Activated B cell treated with CpG ODN at 0.5 μM for 24 hours (primary cell): ENCODE measurements at regions of chr12 and their contacts with region 1.

Region 1: DNA sequence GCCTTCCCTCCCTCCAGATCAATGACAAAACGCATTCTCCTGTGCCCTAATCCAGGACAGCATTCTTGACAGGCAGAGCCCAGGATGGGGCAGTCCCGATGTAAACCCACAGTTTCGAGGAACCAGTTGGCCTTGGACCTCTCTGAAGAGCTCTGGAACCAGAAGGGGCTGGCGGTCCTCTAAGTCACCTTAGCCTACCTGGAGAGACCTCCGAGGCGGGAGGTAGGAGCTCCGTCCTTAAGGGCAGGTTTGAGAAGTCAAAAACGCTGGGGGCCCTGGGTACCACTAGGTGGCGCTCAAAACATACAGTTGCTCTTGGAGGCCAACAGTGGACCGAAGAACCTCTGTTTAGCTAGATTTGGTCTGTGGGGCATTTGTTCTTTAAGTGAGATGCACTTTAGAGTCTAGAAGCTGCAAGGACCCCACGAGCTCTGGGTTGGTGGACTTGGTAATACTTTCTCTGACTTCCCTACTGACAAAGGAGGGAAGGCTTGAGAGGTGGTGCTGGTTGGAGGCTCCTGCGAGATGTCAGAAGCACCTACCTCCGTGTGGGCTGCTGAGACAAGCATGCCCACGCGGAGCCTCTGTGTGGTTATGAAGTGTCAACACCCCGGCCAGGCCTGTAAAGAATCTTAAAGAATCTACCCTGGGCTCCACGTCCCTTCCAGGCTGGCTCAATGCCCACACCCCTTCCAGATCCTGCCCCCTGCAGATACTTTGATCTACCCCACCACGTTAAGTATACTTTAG is 74.8 kb upstream of the CHST11 start:
- DNase-seq: peak; percentile 68
- ATAC-seq: peak; percentile 88
- H3K4me3 Mint-ChIP-seq: no peak overlapping the region
- H3K27ac Mint-ChIP-seq: no peak overlapping the region
- H3K4me1 Mint-ChIP-seq: peaks cover 9% of the 10 kb centered on the region
- H3K27me3 Mint-ChIP-seq: peaks cover 4% of the 10 kb centered on the region
- CTCF ChIP-seq: peak; percentile 29

Region 2: GRCh38 chr12:103513875-103514274 is 868.0 kb before region 1 on chr12:
- CTCF ChIA-PET with region 1: no interaction called
- POLR2A ChIA-PET with region 1: no interaction called
- intact Hi-C with region 1: no loop called
- DNase-seq: no peak
- ATAC-seq: no peak
- H3K4me3 Mint-ChIP-seq: no peak overlapping the region
- H3K27ac Mint-ChIP-seq: peak overlapping the region; percentile 68
- H3K4me1 Mint-ChIP-seq: peaks cover 9% of the 10 kb centered on the region
- H3K27me3 Mint-ChIP-seq: no peaks in the 10 kb centered on the region
- CTCF ChIP-seq: no peak

Region 3: DNA sequence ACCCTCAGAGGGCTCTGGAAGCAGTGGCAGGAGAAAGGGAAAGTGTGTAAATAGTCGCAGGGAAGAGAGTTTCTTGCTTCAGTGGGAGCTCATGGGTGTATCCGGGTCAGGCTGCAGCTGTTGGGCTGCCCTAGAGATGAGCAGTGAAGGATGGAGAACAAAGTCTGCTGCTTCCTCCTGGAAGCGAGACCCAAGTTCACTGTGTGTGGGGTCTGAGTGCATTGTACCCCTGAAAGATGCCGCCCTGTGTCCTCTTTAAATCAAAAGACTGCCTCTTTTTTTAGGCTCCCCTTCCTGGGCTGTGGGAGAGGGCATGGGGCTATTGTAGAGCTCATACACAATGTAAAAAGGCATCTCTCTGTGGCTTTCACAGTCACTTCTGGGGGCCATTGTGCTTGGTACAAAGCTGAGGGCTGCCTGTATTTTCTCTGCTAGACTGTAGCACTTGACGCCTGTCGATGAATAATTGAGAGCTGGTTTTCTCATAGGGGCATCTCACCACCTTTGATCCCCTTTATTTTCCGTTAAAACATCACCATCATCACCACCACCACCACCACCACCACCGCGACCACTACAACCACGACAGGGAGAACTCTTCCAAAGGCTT is 91.6 kb after region 1 on chr12:
- CTCF ChIA-PET with region 1: interaction called, 10 read pairs
- POLR2A ChIA-PET with region 1: no interaction called
- intact Hi-C with region 1: loop called (anchors 5 kb)
- DNase-seq: no peak
- ATAC-seq: peak; percentile 84
- H3K4me3 Mint-ChIP-seq: peak overlapping the region; percentile 81
- H3K27ac Mint-ChIP-seq: peak overlapping the region; percentile 94
- H3K4me1 Mint-ChIP-seq: peaks cover 87% of the 10 kb centered on the region
- H3K27me3 Mint-ChIP-seq: no peaks in the 10 kb centered on the region
- CTCF ChIP-seq: no peak

Region 4: DNA sequence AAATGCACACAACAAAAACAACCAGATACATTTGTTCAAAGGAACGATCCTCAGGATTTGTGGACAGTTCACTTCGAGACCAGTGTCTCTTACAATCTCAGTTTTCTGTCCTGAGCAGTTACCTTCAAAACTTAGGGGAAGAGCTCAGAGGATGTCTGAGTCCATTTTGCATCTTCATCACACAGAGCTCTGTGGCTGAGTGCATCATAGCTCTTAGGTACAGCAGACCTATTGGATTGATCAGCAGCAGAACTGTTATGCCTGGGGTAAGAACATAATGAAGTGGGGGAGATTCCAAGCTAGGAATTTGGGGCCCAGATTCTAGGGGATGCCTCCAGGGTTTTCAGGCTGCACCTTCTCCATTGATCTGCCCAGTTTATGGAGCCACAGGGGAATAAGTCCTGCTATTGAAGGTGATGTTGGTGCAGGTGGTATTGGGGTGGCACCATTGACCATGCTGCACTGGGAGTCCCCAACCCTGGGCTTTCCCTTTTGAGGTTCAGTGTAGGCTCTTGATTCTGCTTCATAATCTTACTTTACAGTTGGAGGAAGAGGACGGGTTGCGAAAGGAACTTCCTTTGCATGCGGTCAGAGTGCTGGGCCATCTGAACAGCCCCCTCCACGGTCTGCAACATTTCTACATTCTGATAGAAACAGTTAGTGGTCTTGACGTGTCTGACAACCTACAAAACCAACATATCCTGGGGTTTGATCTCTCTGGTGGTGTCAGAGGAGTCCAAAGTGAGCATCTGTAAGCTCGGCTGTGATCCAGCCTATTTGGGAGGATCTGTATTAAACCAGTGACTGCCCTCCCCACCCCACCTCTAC is 187.7 kb after region 1 on chr12:
- CTCF ChIA-PET with region 1: interaction called, 24 read pairs
- POLR2A ChIA-PET with region 1: interaction called, 5 read pairs
- intact Hi-C with region 1: loop called (anchors 1 kb)
- DNase-seq: peak; percentile 37
- ATAC-seq: peak; percentile 75
- H3K4me3 Mint-ChIP-seq: peak overlapping the region; percentile 55
- H3K27ac Mint-ChIP-seq: peak overlapping the region; percentile 82
- H3K4me1 Mint-ChIP-seq: peaks cover 73% of the 10 kb centered on the region
- H3K27me3 Mint-ChIP-seq: no peaks in the 10 kb centered on the region
- CTCF ChIP-seq: no peak

Region 5: DNA sequence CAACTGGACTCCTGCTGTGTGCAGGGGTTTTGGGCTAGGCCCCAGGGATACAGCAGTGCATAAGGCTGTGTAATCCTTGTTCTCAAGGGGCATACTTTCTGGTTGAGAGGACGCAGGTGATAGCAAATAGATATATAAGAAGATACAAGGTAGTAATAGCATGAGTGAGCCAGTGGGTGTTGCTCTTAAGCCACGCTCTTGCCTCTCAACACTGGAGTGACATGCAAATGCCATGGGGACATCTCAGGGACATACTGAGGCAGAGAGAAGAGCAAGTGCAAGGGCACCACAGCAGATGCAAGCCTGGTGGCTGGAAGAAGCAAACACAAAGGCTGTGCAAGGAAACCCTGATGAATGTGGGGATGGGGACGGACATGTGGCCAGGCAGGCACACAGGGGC is 298.2 kb after region 1 on chr12:
- CTCF ChIA-PET with region 1: interaction called, 15 read pairs
- POLR2A ChIA-PET with region 1: no interaction called
- intact Hi-C with region 1: loop called (anchors 1 kb)
- DNase-seq: no peak
- ATAC-seq: peak; percentile 64
- H3K4me3 Mint-ChIP-seq: no peak overlapping the region
- H3K27ac Mint-ChIP-seq: no peak overlapping the region
- H3K4me1 Mint-ChIP-seq: peaks cover 88% of the 10 kb centered on the region
- H3K27me3 Mint-ChIP-seq: no peaks in the 10 kb centered on the region
- CTCF ChIP-seq: no peak

Region 6: GRCh38 chr12:104825408-104825807 is 443.5 kb after region 1 on chr12:
- CTCF ChIA-PET with region 1: interaction called, 4 read pairs
- POLR2A ChIA-PET with region 1: no interaction called
- intact Hi-C with region 1: loop called (anchors 1 kb)
- DNase-seq: no peak
- ATAC-seq: no peak
- H3K4me3 Mint-ChIP-seq: no peak overlapping the region
- H3K27ac Mint-ChIP-seq: no peak overlapping the region
- H3K4me1 Mint-ChIP-seq: peaks cover 2% of the 10 kb centered on the region
- H3K27me3 Mint-ChIP-seq: no peaks in the 10 kb centered on the region
- CTCF ChIP-seq: no peak

Region 7: GRCh38 chr12:105030820-105031807 is 649.2 kb after region 1 on chr12:
- CTCF ChIA-PET with region 1: interaction called, 12 read pairs
- POLR2A ChIA-PET with region 1: no interaction called
- intact Hi-C with region 1: no loop called
- DNase-seq: no peak
- ATAC-seq: peak; percentile 52
- H3K4me3 Mint-ChIP-seq: peak overlapping the region; percentile 49
- H3K27ac Mint-ChIP-seq: peak overlapping the region; percentile 54
- H3K4me1 Mint-ChIP-seq: peaks cover 12% of the 10 kb centered on the region
- H3K27me3 Mint-ChIP-seq: no peaks in the 10 kb centered on the region
- CTCF ChIP-seq: no peak